ENCODE measurements at regions of chr1 and their contacts with region 1.

Region 1: GRCh38 chr1:47745725-47746597 is 251.2 kb downstream of the TRABD2B start:
- DNase-seq: no peak
- H3K4me3 ChIP-seq: no peak overlapping the region
- H3K27ac ChIP-seq: no peak overlapping the region
- H3K4me1 ChIP-seq: no peaks in the 10 kb centered on the region
- H3K27me3 ChIP-seq: peaks cover 0 to 15% (median 0%) of the 10 kb centered on the region in 3 donors
- CTCF ChIP-seq: no peak
- EP300 ChIP-seq: no peak
- POLR2A ChIP-seq: no peak

Region 2: DNA sequence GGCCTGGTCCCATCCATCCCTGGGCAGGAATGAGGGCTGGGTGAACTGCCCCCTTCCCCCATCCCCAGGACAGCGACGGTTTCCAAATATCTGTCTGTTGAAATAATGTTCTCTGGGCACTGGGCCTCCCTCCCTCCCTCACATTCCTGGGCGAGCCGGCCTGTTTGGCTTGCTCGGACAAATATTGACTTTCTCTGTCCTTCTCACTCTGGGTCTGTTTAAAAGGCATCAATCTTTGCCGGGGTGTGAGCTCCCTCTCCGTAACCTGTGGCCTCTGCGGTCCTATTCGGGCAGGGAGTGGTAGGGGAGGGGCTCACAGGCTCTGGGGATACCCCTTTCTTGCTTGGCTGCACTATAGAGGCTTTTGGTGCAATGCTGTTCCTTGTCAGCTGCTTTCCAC is 267.9 kb before region 1 on chr1:
- intact Hi-C with region 1: no loop called
- DNase-seq: peak; percentile 79 to 89
- H3K4me3 ChIP-seq: no peak overlapping the region
- H3K27ac ChIP-seq: peak overlapping the region; percentile 39 to 85 (median 79)
- H3K4me1 ChIP-seq: peaks cover 17 to 28% (median 18%) of the 10 kb centered on the region in 4 donors
- H3K27me3 ChIP-seq: no peaks in the 10 kb centered on the region
- CTCF ChIP-seq: no peak
- EP300 ChIP-seq: no peak
- POLR2A ChIP-seq: no peak

Region 3: DNA sequence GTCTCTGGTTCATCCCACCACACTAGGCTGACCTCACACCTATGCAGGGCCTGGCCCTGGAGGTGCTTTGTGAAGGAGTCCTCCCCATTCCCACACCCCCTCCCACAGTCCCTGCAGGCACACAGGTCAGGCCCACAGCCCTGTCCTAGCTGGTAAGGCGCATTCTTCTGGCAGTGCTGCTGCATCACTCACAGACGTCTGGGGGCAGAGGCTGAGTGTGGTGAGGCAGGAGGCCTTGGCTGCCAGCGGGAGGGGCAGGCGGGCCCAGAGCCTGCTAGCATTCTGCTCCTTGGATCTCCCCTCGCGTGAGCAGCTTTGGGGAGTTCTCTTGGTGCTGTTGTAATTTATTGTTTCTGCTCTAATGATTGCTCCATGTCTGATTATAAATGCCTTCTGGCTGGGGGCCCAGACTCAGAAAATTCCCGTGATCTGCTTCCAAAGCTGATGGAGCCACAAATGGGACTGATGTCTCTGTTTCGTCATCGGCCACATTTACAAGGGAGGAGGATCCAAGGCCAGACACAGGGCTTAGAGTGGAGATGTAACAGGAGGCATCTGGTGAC is 188.4 kb after region 1 on chr1:
- intact Hi-C with region 1: loop called (anchors 10 kb)
- DNase-seq: peak; percentile 45 to 77
- H3K4me3 ChIP-seq: no peak overlapping the region
- H3K27ac ChIP-seq: peak overlapping the region in 4 of 5 donors; percentile 28 to 75 (median 48)
- H3K4me1 ChIP-seq: peaks cover 0 to 5% (median 0%) of the 10 kb centered on the region in 4 donors
- H3K27me3 ChIP-seq: no peaks in the 10 kb centered on the region
- CTCF ChIP-seq: no peak
- EP300 ChIP-seq: no peak
- POLR2A ChIP-seq: no peak

Measured in stomach (tissue), 19 donors.